PC-9 (cell line): ENCODE measurements at regions of chr2 and their contacts with region 1.

Region 1: DNA sequence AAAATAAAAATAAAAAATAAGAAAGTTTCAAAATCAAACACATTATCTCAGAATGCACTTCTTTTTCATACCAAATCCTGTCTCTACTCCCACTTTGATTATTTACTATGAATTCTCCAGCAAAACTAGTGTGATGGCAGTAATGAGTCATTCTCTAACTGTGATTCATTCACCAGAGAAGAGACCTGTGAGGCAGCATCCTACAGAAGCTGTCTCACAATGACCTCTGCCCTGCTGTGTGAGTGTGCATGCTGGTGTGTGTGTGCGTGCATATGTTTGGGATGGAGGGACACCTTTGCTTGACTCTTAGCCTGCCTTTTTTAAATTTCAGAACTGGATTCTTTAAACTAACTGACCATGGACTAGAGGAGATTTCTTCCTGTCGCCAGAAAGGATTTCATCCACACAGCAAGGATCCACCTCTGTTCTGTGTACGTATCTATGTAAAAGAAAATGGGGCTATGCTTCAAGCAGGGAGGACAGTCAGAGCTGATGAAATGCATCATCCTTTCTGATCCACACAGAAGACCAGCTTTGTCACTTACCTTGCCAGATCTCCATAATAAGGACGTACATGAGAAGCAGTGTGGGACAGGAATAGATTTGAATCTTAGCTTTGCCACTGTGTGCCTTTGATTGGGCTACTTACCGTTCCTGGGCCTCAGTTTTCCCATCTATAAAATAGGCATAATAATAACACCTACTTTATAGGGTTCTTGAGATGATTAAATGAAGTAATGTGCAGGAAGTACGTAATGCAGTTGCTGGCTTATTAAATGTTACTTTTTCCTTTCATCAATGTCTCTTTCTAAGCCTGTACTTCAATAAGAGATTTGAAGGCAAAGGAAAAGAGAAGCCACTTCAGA is 31.2 kb downstream of the STAMBP start:
- DNase-seq: peak in 1 of 2 experiments; percentile 63
- H3K4me3 ChIP-seq: no peak overlapping the region
- H3K27ac ChIP-seq: no peak overlapping the region
- H3K4me1 ChIP-seq: 0 out of 2 replicates have a peak, but pooled peaks cover 10% of the 10 kb centered on the region
- H3K27me3 ChIP-seq: no peaks in the 10 kb centered on the region
- CTCF ChIP-seq: no peak

Region 2: DNA sequence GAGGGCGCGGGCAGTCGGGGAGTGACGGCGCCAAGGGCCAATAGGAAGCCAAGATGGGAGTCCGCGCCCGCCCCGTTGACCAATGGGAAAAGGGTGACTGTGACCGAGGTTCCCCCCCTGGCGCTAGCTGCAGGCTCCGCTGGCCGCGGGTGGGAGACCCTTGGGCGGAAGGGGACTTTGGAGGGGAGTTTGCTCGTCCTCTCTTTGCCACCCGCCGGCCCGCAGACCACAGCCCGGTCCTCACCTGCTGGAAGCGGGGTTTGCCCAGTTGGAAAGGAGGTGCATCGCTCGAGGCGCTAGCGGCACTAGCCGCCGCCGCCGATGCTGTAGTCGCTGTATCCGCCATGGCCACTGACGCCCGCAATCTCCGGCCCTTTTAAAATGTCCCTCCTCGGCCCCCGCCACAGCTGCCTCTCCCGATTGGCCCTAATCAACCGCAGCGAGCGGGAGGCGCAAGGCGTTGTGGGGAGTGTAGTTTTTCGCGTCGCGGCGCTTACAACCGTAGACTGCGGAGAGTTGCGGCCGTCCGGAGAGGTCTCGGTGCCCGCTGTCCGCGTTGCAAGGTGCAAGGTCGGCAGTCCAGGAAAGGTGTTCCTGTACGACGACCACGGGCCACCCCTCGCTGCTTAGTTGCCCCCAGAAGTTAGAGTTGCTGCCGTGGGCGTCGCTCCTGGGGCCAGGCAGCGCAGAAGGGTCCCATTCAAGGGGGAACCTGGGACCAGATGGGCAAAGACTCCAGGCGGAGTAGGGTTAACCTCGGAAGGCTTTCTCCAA is 788.4 kb before region 1 on chr2 and contains the start of gene SFXN5:
- CTCF ChIA-PET with region 1: interaction called, 11 read pairs
- POLR2A ChIA-PET with region 1: no interaction called
- intact Hi-C with region 1: no loop called
- DNase-seq: peak; percentile 80 to 97
- H3K4me3 ChIP-seq: peak within 1 kb of the TSS; percentile 99
- H3K27ac ChIP-seq: peak within 1 kb of the TSS; percentile 43
- H3K4me1 ChIP-seq: peaks cover 11% of the 10 kb centered on the region
- H3K27me3 ChIP-seq: no peaks in the 10 kb centered on the region
- CTCF ChIP-seq: peak; percentile 18; the same call in 1 of the 2 replicates
- total RNA-seq, gene SFXN5: 12.5 and 15.2 TPM in 2 replicates

Region 3: GRCh38 chr2:73828818-73829570 is 31.0 kb before region 1 on chr2 and contains the start of gene STAMBP:
- CTCF ChIA-PET with region 1: no interaction called
- POLR2A ChIA-PET with region 1: no interaction called
- intact Hi-C with region 1: no loop called
- DNase-seq: peak; percentile 88 to 93
- H3K4me3 ChIP-seq: peak within 1 kb of the TSS; percentile 90
- H3K27ac ChIP-seq: peak within 1 kb of the TSS; percentile 63
- H3K4me1 ChIP-seq: peaks cover 37% of the 10 kb centered on the region
- H3K27me3 ChIP-seq: no peaks in the 10 kb centered on the region
- CTCF ChIP-seq: no peak
- total RNA-seq, gene STAMBP: 42.9 and 52.2 TPM in 2 replicates

Region 4: GRCh38 chr2:74364533-74365505 is 504.9 kb after region 1 on chr2:
- CTCF ChIA-PET with region 1: no interaction called
- POLR2A ChIA-PET with region 1: no interaction called
- intact Hi-C with region 1: no loop called
- DNase-seq: no peak
- H3K4me3 ChIP-seq: no peak overlapping the region
- H3K27ac ChIP-seq: no peak overlapping the region
- H3K4me1 ChIP-seq: no peaks in the 10 kb centered on the region
- H3K27me3 ChIP-seq: no peaks in the 10 kb centered on the region
- CTCF ChIP-seq: no peak